ENCODE measurements at regions of chr3 and their contacts with region 1.

Region 1: DNA sequence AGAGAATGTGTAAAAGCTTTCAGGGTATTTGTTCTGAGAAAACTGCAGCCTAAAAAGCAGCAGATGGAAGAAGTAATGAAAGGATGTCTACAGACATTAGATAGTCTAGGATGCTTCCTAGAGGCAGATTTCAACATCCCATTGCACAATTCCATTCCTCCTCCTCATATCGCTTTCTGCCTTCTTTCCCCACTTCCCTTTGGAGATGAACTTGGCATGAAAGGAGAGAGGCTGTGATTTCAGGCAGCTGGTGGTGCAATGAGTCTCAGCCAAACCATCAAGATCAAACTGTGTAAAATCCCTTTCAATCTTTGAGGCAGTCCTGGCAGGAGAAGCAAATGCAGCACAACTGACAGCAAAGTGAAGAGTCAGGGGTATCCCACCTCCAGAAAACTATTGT is 438.7 kb upstream of the KCNMB2 start:
- DNase-seq: peak in 2 of 5 donors; percentile 33 to 34
- ATAC-seq: peak; percentile 47 to 96 (median 76)
- H3K4me3 ChIP-seq: no peak overlapping the region
- H3K27ac ChIP-seq: peak overlapping the region in 1 of 12 donors; percentile 8
- H3K4me1 ChIP-seq: no peaks in the 10 kb centered on the region
- H3K27me3 ChIP-seq: no peaks in the 10 kb centered on the region
- CTCF ChIP-seq: no peak
- POLR2A ChIP-seq: no peak

Region 2: DNA sequence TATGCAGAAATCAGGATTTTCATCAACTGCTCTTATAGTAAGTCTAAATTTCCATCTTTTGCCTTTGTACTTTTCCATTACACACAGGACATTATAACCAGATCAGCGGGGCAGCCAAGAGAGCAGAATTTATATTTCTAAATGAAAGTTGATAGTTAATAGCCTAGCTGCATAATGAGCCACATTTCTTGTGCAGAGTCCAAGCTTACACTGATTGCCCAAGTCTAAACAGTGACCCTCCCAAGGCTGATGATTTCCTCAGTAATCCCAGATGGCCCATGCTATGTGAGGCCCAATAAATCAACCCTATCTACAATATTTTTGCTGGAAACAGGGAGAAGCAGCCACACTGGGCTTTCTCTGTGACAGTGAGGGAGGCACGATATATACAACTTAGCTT is 37.2 kb before region 1 on chr3:
- intact Hi-C with region 1: no loop called
- DNase-seq: peak in 1 of 5 donors; percentile 31
- ATAC-seq: peak in 3 of 4 donors; percentile 71 to 83 (median 82)
- H3K4me3 ChIP-seq: no peak overlapping the region
- H3K27ac ChIP-seq: peak overlapping the region in 4 of 12 donors; percentile 4 to 30 (median 26)
- H3K4me1 ChIP-seq: peaks cover 0 to 40% (median 11%) of the 10 kb centered on the region in 12 donors
- H3K27me3 ChIP-seq: no peaks in the 10 kb centered on the region
- CTCF ChIP-seq: no peak
- POLR2A ChIP-seq: no peak

Region 3: DNA sequence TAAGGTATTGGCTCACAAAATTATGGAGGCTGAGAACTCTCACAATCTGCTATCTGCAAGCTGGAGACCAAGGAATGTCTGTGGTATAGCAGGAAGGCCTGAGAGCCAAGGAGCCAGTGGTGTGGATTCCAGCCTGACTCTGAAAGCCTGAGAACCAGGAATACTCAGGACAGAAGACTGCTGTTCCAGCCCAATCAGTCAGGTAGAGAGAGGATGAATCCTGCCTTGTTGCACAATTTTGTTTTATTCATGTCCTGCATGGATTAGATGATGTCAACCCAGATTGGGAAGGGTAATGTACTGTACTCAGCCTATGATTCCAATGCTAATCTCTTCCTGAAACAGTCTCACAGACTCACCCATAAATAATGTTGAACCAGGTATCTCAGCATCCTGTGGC is 126.3 kb after region 1 on chr3:
- intact Hi-C with region 1: no loop called
- DNase-seq: no peak
- ATAC-seq: no peak
- H3K4me3 ChIP-seq: no peak overlapping the region
- H3K27ac ChIP-seq: no peak overlapping the region
- H3K4me1 ChIP-seq: no peaks in the 10 kb centered on the region
- H3K27me3 ChIP-seq: no peaks in the 10 kb centered on the region
- CTCF ChIP-seq: no peak
- POLR2A ChIP-seq: no peak

Region 4: GRCh38 chr3:178289544-178290160 is 192.1 kb after region 1 on chr3:
- intact Hi-C with region 1: loop called in 1 of 10 experiments (anchors 10 kb)
- DNase-seq: peak in 4 of 5 donors; percentile 27 to 52 (median 36)
- ATAC-seq: peak; percentile 62 to 75 (median 69)
- H3K4me3 ChIP-seq: no peak overlapping the region
- H3K27ac ChIP-seq: peak overlapping the region in 8 of 12 donors; percentile 12 to 60 (median 30)
- H3K4me1 ChIP-seq: peaks cover 0 to 5% (median 0%) of the 10 kb centered on the region in 12 donors
- H3K27me3 ChIP-seq: no peaks in the 10 kb centered on the region
- CTCF ChIP-seq: no peak
- POLR2A ChIP-seq: no peak

Measured in heart left ventricle (tissue), 16 donors.